Heart left ventricle (tissue), 16 donors: ENCODE measurements at regions of chr10 and their contacts with region 1.

Region 1: DNA sequence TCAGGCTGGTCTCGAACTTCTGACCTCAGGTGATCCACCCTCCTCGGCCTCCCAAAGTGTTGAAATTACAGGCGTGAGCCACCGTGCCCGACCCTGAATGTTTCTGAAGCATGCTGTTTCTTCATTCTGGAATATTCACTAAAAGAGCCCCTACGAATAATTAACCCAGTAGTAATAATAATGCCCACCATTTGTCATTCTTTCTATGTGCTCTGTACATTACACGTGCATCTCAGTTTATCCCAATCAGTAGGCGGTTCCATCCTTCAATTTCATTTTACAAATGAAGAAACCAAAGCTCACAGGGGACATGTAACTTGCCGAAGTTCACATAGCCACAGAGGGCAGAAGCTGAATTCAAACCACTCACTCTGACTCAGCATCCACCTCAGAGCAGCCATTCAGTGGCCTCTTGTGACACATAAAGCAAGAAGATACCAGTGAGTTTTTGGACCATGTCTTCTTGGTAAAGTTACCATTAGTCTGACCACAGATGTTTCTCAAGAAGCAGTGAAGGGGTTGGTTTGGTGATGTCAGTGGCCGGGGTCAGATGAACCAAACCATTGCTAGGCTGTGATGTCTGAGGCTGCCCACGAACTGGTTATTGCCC is 71.9 kb upstream of the DUSP5 start:
- DNase-seq: no peak
- ATAC-seq: peak in 1 of 4 donors; percentile 20
- H3K4me3 ChIP-seq: no peak overlapping the region
- H3K27ac ChIP-seq: peak overlapping the region in 9 of 12 donors; percentile 3 to 74 (median 57)
- H3K4me1 ChIP-seq: peaks cover 0 to 51% (median 10%) of the 10 kb centered on the region in 12 donors
- H3K27me3 ChIP-seq: no peaks in the 10 kb centered on the region
- CTCF ChIP-seq: no peak
- POLR2A ChIP-seq: no peak

Region 2: GRCh38 chr10:110336111-110336721 is 89.6 kb before region 1 on chr10:
- intact Hi-C with region 1: loop called in 1 of 10 experiments (anchors 10 kb)
- DNase-seq: no peak
- ATAC-seq: peak in 2 of 4 donors; percentile 49 to 51
- H3K4me3 ChIP-seq: no peak overlapping the region
- H3K27ac ChIP-seq: no peak overlapping the region
- H3K4me1 ChIP-seq: peaks cover 0 to 10% (median 0%) of the 10 kb centered on the region in 12 donors
- H3K27me3 ChIP-seq: no peaks in the 10 kb centered on the region
- CTCF ChIP-seq: no peak
- POLR2A ChIP-seq: no peak

Region 3: DNA sequence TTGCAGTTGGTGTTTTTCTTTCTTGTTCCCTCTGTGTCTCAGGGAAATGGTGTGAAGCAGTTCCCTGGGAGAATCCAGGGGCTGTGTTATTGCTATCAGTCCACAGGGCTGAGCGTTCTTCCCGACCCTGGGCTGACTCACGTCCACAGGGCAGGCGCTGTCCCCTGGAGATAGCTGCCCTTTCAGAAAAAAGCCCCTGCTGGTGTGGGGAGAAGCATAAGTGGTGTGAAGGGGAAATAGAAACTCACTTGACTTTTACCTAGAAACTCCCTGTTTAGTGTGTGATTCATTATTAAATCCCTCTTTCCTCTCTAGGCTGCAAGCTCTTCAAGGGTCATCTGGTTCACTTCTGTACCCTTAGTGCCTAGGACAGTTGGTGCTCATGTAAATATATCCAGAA is 57.8 kb before region 1 on chr10:
- intact Hi-C with region 1: loop called in 1 of 10 experiments (anchors 10 kb)
- DNase-seq: no peak
- ATAC-seq: no peak
- H3K4me3 ChIP-seq: no peak overlapping the region
- H3K27ac ChIP-seq: no peak overlapping the region
- H3K4me1 ChIP-seq: no peaks in the 10 kb centered on the region
- H3K27me3 ChIP-seq: no peaks in the 10 kb centered on the region
- CTCF ChIP-seq: no peak
- POLR2A ChIP-seq: no peak